MCF 10A (cell line): ENCODE measurements at regions of chr21 and their contacts with region 1.

Region 1: DNA sequence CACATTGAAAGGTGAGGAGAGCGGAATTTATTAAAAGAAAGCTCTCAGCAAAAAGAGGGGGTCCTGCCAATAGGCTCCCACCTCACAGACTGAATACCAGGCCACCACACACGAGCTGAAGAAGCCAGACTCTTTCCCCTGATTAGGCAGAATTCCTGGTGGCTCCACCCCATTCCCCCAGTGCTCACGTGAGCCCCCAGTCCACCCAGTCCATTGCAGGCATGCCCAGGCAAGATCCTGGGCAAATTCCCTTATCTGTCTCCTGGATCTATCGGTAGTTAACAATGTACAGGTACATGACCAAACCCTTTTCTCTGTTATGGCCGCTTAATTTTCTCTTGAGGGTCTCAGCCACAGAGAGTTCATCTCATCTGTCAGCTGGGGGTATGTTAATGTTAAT is 54.6 kb upstream of the BTG3 start:
- DNase-seq: peak; percentile 22
- H3K4me3 Mint-ChIP-seq: no peak overlapping the region
- H3K27ac Mint-ChIP-seq: peak overlapping the region; percentile 91
- H3K4me1 Mint-ChIP-seq: peaks cover 8% of the 10 kb centered on the region
- H3K27me3 Mint-ChIP-seq: no peaks in the 10 kb centered on the region
- CTCF ChIP-seq: no peak

Region 2: DNA sequence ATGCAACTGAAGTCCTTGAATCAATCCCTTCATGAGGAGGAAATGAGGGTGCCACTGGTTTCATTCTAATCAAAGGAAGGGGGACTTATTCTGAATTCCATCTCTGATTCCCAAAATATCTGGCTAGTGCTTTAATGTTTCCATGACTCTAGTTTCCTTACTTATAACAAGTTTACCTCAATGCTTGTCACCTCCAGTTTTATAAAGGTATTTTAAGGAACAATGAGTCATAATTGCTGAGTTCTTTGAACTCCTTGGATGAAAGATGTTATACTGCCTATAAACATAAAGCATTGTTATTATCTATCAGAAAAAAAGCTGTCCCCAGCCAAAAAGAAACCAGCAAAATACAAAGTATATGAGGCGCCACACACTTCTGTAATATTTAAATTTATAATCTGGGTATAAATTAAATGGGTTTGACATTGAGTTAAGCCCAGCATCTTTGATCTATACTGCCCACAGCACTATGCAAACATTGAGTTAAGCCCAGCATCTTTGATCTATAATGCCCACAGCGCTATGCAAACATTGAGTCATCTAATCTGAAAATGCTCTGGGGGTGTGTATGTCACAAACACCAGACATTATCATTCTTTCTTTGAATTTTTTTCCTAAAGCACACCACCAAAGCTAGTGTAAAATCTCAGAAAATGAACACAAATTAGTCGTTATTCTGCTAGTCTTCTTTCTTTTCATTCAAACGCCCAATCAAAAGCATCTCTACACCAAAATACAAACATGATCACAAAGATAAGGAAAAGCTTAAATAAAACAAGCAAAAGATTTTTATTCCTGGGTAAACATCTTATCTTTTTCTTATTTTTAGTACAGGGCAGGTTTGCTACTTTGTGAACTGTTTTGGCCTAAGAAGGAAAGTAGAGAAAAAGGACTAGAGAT is 165.9 kb before region 1 on chr21:
- CTCF ChIA-PET with region 1: no interaction called
- POLR2A ChIA-PET with region 1: no interaction called
- intact Hi-C with region 1: no loop called
- DNase-seq: no peak
- H3K4me3 Mint-ChIP-seq: no peak overlapping the region
- H3K27ac Mint-ChIP-seq: no peak overlapping the region
- H3K4me1 Mint-ChIP-seq: no peaks in the 10 kb centered on the region
- H3K27me3 Mint-ChIP-seq: no peaks in the 10 kb centered on the region
- CTCF ChIP-seq: no peak

Region 3: DNA sequence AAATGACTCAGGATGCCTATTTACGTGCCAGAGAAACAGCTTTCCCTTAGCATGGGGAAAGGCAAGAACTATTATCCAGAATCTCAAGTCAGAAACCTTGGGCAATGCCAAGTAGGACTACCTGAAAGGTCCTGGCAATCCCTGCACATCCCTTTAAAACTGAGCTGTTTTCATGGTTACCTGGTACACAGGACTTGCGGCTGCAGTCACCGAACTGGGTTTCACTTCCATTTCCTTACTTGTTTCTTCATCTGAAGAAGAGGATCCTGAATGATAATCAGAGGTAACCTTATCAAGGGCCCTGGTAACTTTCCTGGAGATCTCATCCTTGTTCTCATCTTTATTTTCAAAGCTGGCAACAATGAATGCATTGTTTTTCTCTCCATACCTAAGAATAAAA is 68.8 kb before region 1 on chr21:
- CTCF ChIA-PET with region 1: no interaction called
- POLR2A ChIA-PET with region 1: no interaction called
- intact Hi-C with region 1: no loop called
- DNase-seq: no peak
- H3K4me3 Mint-ChIP-seq: no peak overlapping the region
- H3K27ac Mint-ChIP-seq: no peak overlapping the region
- H3K4me1 Mint-ChIP-seq: peaks cover 9% of the 10 kb centered on the region
- H3K27me3 Mint-ChIP-seq: no peaks in the 10 kb centered on the region
- CTCF ChIP-seq: no peak

Region 4: GRCh38 chr21:17640821-17641220 is 26.4 kb before region 1 on chr21:
- CTCF ChIA-PET with region 1: no interaction called
- POLR2A ChIA-PET with region 1: no interaction called
- intact Hi-C with region 1: loop called (anchors 1 kb)
- DNase-seq: no peak
- H3K4me3 Mint-ChIP-seq: no peak overlapping the region
- H3K27ac Mint-ChIP-seq: no peak overlapping the region
- H3K4me1 Mint-ChIP-seq: no peaks in the 10 kb centered on the region
- H3K27me3 Mint-ChIP-seq: no peaks in the 10 kb centered on the region
- CTCF ChIP-seq: no peak

Region 5: GRCh38 chr21:17730782-17731181 is 63.5 kb after region 1 on chr21:
- CTCF ChIA-PET with region 1: no interaction called
- POLR2A ChIA-PET with region 1: no interaction called
- intact Hi-C with region 1: no loop called
- DNase-seq: peak; percentile 22
- H3K4me3 Mint-ChIP-seq: no peak overlapping the region
- H3K27ac Mint-ChIP-seq: no peak overlapping the region
- H3K4me1 Mint-ChIP-seq: peaks cover 15% of the 10 kb centered on the region
- H3K27me3 Mint-ChIP-seq: no peaks in the 10 kb centered on the region
- CTCF ChIP-seq: no peak